ENCODE measurements at regions of chr14 and their contacts with region 1.

Region 1: DNA sequence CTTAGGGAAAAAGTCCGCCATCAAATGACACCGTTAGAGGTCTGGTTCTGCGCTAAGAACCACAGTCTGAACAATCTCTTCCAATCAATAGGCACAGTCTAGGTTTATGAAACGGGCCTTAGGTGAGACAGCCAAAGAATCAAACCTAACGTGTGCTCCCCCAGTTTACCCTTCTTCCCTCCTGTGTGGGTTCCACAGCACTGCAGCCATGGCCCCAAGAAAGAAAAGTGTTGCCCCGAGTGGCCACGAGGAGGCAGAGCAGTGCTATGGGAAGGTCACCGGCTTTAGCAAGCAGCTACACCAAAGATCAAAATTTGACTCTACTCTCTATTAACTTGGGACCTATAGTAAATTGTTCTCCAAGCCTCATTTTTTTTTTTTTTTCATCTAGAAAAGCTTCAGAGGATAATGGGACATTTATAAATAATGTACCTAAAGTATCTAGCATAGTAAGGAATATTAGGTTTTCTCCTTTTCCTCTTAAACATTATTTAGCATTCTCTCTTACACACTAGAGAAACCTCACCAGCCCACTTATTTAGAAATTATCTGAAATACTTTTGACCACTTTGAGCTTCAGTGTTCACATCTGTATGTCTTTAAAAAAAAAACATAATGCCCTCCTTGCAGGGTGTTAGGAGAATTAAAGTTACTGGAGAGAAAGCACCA is 70.2 kb upstream of the GPHB5 start:
- DNase-seq: peak; percentile 45 to 68 (median 55)
- H3K4me3 ChIP-seq: no peak overlapping the region
- H3K27ac ChIP-seq: no peak overlapping the region
- H3K4me1 ChIP-seq: no peaks in the 10 kb centered on the region
- H3K27me3 ChIP-seq: no peaks in the 10 kb centered on the region
- CTCF ChIP-seq: peak; percentile 82

Region 2: DNA sequence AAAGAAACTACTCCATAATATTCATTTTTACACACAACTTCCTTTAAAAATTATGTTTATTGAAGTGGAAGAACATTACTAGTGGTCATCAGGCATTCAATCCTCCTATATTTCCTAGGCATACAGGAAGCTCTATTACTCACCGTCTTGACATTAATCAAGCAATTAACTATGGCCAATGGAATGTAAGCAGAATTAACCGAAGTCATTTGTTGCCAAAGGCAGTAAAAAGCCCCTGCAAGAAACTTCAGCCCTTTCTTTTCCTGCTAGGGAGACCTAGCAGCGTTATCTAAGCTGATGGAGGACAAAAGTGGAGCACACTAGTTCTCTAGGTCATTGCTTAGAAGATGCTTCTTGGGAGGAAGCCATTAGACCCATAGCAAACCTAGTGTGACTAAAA is 743.2 kb before region 1 on chr14:
- intact Hi-C with region 1: no loop called
- DNase-seq: no peak
- H3K4me3 ChIP-seq: no peak overlapping the region
- H3K27ac ChIP-seq: no peak overlapping the region
- H3K4me1 ChIP-seq: no peaks in the 10 kb centered on the region
- H3K27me3 ChIP-seq: no peaks in the 10 kb centered on the region
- CTCF ChIP-seq: no peak

Region 3: GRCh38 chr14:63328787-63329737 is 59.8 kb before region 1 on chr14:
- intact Hi-C with region 1: no loop called
- DNase-seq: no peak
- H3K4me3 ChIP-seq: no peak overlapping the region
- H3K27ac ChIP-seq: no peak overlapping the region
- H3K4me1 ChIP-seq: no peaks in the 10 kb centered on the region
- H3K27me3 ChIP-seq: no peaks in the 10 kb centered on the region
- CTCF ChIP-seq: no peak

Region 4: GRCh38 chr14:63543000-63543825 is 154.3 kb after region 1 on chr14 and contains the start of gene PPP2R5E:
- intact Hi-C with region 1: loop called (anchors 10 kb)
- DNase-seq: peak; percentile 99 to 100 (median 99)
- H3K4me3 ChIP-seq: peak within 1 kb of the TSS; percentile 83 to 93 (median 88)
- H3K27ac ChIP-seq: peak within 1 kb of the TSS; percentile 71 to 84
- H3K4me1 ChIP-seq: peaks cover 0 to 7% (median 0%) of the 10 kb centered on the region in 3 donors
- H3K27me3 ChIP-seq: no peaks in the 10 kb centered on the region
- CTCF ChIP-seq: no peak
- total RNA-seq, gene PPP2R5E: 46.5 TPM

Region 5: DNA sequence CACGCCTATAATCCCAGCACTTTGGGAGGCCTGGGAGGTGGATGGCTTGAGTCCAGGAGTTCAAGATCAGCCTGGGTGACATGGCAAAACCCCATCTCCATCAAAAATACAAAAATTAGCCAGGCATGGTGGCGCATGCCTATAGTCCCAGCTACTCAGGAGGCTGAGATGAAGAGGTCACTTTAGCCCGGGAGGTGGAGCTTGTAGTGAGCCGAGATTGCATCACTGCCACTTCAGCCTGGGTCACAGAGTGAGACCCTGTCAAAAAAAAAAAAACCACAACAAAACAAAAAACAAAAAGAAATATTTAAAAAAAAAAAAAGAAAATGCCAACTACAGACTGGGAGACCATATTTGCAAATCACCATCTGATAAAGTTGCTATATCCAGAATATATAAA is 235.3 kb after region 1 on chr14:
- intact Hi-C with region 1: loop called (anchors 10 kb)
- DNase-seq: no peak
- H3K4me3 ChIP-seq: no peak overlapping the region
- H3K27ac ChIP-seq: no peak overlapping the region
- H3K4me1 ChIP-seq: no peaks in the 10 kb centered on the region
- H3K27me3 ChIP-seq: no peaks in the 10 kb centered on the region
- CTCF ChIP-seq: no peak

Region 6: GRCh38 chr14:63760014-63760413 is 371.1 kb after region 1 on chr14:
- intact Hi-C with region 1: loop called (anchors 10 kb)
- DNase-seq: no peak
- H3K4me3 ChIP-seq: no peak overlapping the region
- H3K27ac ChIP-seq: no peak overlapping the region
- H3K4me1 ChIP-seq: no peaks in the 10 kb centered on the region
- H3K27me3 ChIP-seq: no peaks in the 10 kb centered on the region
- CTCF ChIP-seq: no peak

Measured in kidney (tissue), 22 donors.